ENCODE measurements at regions of chr19 and their contacts with region 1.

Region 1: DNA sequence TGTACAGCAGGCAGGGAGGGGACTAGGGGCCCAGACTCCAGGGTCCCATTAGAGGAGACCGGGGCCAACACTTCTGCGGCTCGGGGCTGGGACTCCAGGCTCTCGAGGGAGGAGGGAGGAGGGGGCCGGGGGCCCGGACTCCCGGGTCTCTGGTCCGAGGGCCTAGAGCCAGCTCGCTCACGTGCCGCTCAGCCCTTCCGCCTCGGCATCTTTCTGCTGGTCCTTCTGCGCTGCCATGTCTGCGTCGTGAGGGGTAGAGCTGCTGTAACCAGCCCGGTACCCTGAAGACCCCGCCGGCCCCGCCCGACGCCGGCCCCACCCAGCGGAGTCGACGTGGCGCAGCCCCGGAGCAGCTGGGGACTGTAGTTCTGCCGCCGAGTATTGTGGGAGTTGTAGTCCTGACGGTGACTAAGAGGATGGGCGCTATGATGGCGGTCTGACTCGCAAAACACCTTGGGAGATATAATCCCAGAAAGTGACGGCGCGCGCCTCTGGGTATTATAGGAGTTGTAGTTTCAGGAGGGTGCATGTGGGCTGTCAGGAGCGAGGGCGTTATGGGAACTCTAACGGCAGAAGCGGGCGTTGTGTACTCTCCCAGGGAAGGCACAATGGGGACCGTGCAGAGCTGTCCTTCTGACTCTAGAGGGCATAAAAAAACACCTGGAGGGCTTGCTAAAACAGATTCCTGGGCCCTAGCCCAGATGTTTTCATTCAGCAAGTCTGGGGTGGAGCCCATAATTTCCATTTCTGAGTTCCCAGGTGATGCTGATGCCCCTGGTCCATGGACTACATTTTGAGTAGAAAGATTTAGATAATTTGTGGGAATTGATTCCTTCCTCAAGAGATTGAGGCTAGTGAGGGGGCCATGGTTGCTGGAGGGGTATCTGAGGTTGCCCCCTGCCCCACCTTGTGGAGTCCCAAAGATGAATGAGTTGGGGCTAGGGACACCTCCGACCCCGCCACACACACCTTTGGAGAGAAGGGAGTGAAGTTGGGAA is at the start of gene RABAC1:
- DNase-seq: peak; percentile 95
- ATAC-seq: peak; percentile 91
- H3K4me3 Mint-ChIP-seq: peak within 1 kb of the TSS; percentile 94
- H3K27ac Mint-ChIP-seq: peak within 1 kb of the TSS; percentile 87
- H3K4me1 Mint-ChIP-seq: peaks cover 19% of the 10 kb centered on the region
- H3K27me3 Mint-ChIP-seq: no peaks in the 10 kb centered on the region
- total RNA-seq, gene RABAC1: 81.3 to 93.9 TPM

Region 2: DNA sequence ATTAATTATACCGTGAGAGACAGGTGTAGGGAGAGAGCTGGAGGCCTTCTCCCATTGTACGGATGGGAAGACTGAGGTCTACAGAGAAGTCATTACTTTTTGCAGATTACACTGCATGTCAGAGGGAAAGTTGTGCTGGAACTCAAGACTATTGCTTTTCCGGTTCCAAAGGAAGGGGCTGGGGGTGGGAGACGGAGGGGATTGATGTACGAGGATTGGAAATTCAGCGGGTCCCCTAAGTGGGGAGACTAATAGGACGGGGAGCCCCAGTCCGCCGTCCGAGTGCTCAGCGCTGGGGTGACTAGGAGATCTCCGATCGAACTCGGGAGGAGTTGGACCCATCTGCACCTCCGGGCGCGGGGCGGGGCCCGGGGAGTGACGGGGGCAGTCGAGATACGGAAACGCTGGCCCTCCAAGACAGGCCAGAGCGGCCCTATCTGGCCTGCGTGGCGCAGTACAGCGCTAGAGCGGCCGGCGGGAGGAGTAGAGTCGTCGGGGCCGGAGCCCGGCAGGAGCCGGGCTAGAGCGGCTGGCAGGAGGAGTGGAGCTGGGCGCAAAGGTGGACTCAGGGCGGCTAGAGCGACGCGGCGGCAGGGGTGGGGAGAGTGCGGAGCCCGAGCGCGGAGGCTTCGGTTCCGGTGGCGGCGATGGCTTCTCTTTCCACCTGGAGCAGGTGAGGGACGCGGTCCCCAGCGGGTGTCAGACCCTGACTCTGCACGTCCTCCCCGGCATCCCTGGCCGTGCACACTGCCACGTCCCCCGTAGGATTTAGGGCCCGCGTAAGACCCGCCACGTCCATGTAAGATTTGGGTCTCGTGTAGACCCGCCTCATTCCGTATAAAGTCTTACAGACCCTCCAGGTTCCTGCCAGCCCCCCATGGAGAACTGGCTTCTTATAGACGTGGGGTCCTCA is 75.3 kb before region 1 on chr19:
- CTCF ChIA-PET with region 1: interaction called, 18 read pairs
- DNase-seq: peak; percentile 97
- ATAC-seq: peak; percentile 81
- H3K4me3 Mint-ChIP-seq: peak overlapping the region; percentile 82
- H3K27ac Mint-ChIP-seq: peak overlapping the region; percentile 94
- H3K4me1 Mint-ChIP-seq: peaks cover 41% of the 10 kb centered on the region
- H3K27me3 Mint-ChIP-seq: no peaks in the 10 kb centered on the region

Region 3: DNA sequence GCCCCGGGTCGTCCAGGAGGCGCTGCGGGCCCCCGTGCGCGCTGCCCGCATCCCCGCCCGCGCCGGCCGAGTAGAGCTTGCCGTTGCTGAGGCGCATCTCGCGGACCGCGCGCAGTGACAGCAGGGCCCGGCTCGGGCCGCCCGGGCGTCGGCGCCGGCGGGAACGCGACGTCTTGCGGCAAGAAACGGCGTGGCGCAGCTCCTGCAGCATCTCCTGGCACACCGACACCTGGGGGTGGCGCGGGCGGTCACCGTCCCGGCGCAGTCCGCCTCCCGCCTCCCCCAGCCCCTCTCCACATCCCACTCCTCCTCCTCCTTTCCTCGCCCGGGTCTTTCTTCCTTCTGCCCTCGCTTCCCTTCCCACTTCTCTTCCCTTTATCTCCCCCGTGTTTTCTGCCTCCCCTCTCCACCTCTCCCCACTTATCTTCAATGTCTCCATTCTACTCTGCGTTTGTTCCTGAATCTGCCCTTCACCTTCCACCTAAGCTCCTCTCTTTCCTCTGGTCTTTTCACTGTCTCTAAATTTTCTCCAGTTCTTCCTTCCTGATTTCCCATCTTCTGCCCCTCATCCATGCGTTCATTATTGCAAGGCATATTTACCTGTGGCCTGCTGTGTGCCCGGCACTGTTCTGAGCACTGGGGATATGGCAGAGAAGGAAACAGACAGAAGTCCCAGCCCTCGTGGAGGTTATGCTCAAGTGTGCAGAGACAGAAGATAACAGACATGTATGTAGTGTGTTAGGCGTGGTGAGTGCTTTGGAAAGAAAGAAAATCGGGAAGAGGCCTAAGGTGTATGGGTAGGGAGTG is 39.9 kb after region 1 on chr19:
- CTCF ChIA-PET with region 1: no interaction called
- DNase-seq: no peak
- ATAC-seq: no peak
- H3K4me3 Mint-ChIP-seq: no peak overlapping the region
- H3K27ac Mint-ChIP-seq: no peak overlapping the region
- H3K4me1 Mint-ChIP-seq: peaks cover 28% of the 10 kb centered on the region
- H3K27me3 Mint-ChIP-seq: peaks cover 72% of the 10 kb centered on the region